Activated naive CD4-positive, alpha-beta T cell treated with anti-CD3 and anti-CD28 coated beads for 36 hours (primary cell): ENCODE measurements at regions of chr3 and their contacts with region 1.

Region 1: GRCh38 chr3:5426094-5426883 is 238.8 kb downstream of the EDEM1 start:
- DNase-seq: peak; percentile 84
- H3K4me3 Mint-ChIP-seq: no peak overlapping the region
- H3K27ac Mint-ChIP-seq: no peak overlapping the region
- H3K4me1 Mint-ChIP-seq: peaks cover 14% of the 10 kb centered on the region
- H3K27me3 Mint-ChIP-seq: peaks cover 7% of the 10 kb centered on the region

Region 2: DNA sequence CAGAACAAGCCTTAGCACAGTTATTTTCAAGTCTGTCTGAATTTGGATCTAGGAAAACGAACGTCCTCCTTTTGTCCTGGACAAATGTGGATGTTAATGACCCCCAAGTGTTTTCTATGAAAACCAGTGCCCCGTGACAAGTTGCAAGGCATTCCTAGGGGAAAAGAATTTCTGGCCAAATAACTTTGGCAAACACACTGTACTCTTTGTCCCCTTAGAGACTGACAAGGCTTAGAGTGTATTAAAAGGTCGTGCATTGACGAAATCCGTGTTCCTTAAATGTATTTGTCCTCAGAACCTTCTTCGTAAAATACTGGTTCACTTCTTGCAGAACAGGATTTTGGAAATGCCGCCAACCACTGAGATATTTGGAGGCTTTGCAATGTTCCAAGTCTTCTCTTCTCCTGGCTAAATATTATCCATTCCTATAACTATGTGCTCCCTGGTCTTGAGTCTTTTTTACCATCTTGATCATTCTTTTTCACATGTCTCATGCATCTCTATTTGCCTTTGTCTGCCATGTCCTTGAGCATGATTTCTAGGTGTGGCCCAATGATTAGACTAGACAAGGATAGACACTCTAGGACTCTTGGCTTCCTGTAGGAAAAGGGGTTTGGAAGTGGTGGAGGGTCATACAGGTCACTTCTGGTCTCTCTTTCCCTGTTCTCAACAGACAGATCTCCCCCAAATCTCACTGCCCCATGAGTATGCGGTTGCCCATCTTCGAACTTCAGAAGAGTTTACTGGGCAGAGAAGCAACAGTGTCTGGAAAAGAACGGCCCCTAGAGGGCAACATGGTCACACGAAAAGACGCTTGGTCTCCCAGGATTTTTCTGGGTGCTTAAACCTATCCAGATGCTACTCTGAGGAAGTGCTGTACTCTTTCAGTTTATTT is 121.3 kb before region 1 on chr3:
- CTCF ChIA-PET with region 1: no interaction called
- intact Hi-C with region 1: loop called (anchors 1 kb)
- DNase-seq: peak; percentile 70
- H3K4me3 Mint-ChIP-seq: no peak overlapping the region
- H3K27ac Mint-ChIP-seq: no peak overlapping the region
- H3K4me1 Mint-ChIP-seq: no peaks in the 10 kb centered on the region
- H3K27me3 Mint-ChIP-seq: no peaks in the 10 kb centered on the region

Region 3: GRCh38 chr3:5540532-5540931 is 114.2 kb after region 1 on chr3:
- CTCF ChIA-PET with region 1: no interaction called
- intact Hi-C with region 1: no loop called
- DNase-seq: no peak
- H3K4me3 Mint-ChIP-seq: no peak overlapping the region
- H3K27ac Mint-ChIP-seq: no peak overlapping the region
- H3K4me1 Mint-ChIP-seq: no peaks in the 10 kb centered on the region
- H3K27me3 Mint-ChIP-seq: no peaks in the 10 kb centered on the region

Region 4: DNA sequence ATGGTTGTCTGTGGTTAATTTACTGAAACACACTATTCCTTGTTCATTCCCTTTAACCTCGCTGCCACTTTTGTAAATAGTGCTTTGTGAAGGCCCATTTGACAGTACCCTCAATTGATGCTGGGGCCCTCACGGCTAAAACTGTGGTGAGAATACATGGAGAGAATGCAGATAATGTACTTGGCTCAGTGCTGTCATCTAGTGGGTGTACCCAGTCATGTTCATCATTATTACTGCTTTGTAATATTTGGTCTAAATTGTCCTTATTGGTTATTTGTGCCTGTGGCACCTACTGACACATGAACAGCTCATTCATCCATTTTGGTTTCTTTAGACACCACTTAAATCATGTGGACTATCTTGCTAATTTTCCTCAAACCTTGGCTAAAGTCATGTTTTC is 304.8 kb after region 1 on chr3:
- CTCF ChIA-PET with region 1: interaction called, 7 read pairs
- intact Hi-C with region 1: loop called (anchors 2 kb)
- DNase-seq: no peak
- H3K4me3 Mint-ChIP-seq: no peak overlapping the region
- H3K27ac Mint-ChIP-seq: no peak overlapping the region
- H3K4me1 Mint-ChIP-seq: no peaks in the 10 kb centered on the region
- H3K27me3 Mint-ChIP-seq: no peaks in the 10 kb centered on the region

Region 5: GRCh38 chr3:6799264-6799915 is 1373.1 kb after region 1 on chr3:
- CTCF ChIA-PET with region 1: no interaction called
- intact Hi-C with region 1: loop called (anchors 1 kb)
- DNase-seq: peak; percentile 62
- H3K4me3 Mint-ChIP-seq: no peak overlapping the region
- H3K27ac Mint-ChIP-seq: no peak overlapping the region
- H3K4me1 Mint-ChIP-seq: no peaks in the 10 kb centered on the region
- H3K27me3 Mint-ChIP-seq: no peaks in the 10 kb centered on the region